Activated naive CD4-positive, alpha-beta T cell treated with anti-CD3 and anti-CD28 coated beads for 36 hours (primary cell): ENCODE measurements at regions of chr11 and their contacts with region 1.

Region 1: GRCh38 chr11:14892036-14892567 is at the start of gene CYP2R1:
- DNase-seq: peak; percentile 95
- H3K4me3 Mint-ChIP-seq: peak within 1 kb of the TSS; percentile 86
- H3K27ac Mint-ChIP-seq: peak within 1 kb of the TSS; percentile 98
- H3K4me1 Mint-ChIP-seq: peaks cover 52% of the 10 kb centered on the region
- H3K27me3 Mint-ChIP-seq: no peaks in the 10 kb centered on the region
- total RNA-seq, gene CYP2R1: 12.0 to 12.6 TPM

Region 2: DNA sequence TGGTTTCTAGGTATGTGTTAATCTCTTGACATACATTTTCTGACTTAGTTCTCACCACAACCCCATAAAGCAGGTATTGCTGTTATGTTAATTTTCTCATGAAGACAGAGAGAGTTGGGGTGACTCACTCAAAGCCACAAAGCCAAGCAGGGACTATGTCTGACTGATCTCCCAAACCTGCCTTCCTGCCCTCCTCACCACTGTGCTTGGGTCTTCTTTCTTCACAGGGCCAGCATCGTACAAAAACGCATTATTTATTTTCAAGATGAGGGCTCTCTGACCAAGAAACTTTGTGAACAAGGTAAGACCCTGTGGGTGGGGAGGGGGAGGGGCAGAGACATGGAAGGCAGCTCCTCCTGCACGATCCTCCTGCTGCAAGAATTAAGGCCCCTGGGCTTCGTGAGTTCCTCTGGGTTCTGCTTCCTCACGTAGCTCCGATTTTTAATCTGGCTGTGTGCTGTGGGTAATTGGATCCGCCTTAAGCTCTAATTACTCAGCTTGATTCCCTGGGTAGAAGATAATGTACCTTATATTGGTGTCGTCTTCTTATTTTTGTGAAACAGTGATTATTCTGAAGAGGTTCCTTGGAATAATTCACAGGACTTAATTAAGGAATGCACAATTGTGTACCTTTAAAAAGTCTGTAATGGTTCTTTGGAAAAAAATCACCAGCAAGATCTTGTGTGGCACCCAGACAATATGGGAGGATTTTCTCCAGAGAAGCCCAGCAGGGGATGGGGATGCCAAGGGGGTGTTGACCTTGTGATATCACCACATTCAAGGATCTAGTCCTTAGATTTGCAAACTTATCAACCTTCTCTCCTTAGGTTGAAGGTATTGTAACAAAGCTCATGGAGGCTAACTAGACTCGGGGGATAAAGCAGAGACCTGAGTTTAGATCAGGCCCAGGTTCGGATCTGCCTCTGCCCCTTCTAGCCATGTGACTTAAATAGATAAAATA is 816.7 kb before region 1 on chr11:
- CTCF ChIA-PET with region 1: no interaction called
- intact Hi-C with region 1: loop called (anchors 1 kb)
- DNase-seq: peak; percentile 86
- H3K4me3 Mint-ChIP-seq: peak overlapping the region; percentile 13
- H3K27ac Mint-ChIP-seq: peak overlapping the region; percentile 62
- H3K4me1 Mint-ChIP-seq: peaks cover 55% of the 10 kb centered on the region
- H3K27me3 Mint-ChIP-seq: no peaks in the 10 kb centered on the region

Region 3: DNA sequence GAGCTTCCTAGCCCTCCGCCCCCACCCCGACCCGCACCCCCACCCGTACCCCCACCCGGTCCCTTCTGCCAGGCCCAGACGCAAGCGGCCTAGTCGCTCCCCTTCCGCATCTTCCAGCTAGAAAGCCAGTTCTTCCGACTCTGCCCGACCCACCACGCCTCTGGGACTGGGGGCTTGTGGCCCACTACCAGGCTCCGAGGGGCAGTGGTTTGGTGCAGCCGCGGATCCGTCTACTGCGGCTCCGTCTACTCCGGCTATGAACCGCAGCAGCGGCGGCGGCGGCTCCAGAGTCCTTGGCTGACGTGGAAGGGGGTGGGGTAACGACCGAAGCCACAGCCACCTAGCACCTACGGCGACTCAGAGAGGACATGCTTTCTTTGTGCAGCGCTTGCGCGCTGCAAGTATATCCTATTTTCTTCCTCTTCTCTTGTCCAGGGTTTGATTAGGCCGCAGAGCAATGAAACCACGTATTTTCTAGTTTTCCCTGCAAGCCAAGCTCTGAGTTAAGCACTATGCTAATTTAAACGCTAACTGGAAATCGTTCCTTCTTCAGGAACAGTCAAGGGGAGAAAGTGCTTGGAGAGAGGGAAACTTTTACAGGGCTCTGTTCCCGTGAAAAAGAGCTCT is 392.4 kb before region 1 on chr11 and contains the start of gene COPB1:
- CTCF ChIA-PET with region 1: no interaction called
- intact Hi-C with region 1: loop called (anchors 1 kb)
- DNase-seq: peak; percentile 97
- H3K4me3 Mint-ChIP-seq: peak within 1 kb of the TSS; percentile 99
- H3K27ac Mint-ChIP-seq: peak within 1 kb of the TSS; percentile 99
- H3K4me1 Mint-ChIP-seq: peaks cover 40% of the 10 kb centered on the region
- H3K27me3 Mint-ChIP-seq: no peaks in the 10 kb centered on the region
- total RNA-seq, gene COPB1: 111 to 112 TPM

Region 4: DNA sequence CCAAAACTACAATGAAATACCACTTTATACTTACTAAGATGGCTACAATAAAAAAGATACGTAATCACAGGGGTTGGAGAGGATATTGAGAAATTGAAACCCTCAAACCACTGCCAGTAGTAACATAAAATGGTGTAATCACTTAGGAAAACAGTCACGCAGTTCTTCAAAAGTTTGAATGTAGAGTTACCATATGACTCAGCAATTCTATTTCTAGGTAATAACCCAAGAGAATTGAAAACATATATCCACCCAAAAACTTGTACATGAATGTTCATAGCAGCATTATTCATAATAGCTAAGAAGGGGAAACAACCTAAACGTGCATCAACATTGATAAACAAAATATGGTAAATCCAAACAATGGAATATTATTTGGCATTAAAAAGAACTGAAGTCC is 347.5 kb before region 1 on chr11:
- CTCF ChIA-PET with region 1: interaction called, 3 read pairs
- intact Hi-C with region 1: loop called (anchors 1 kb)
- DNase-seq: no peak
- H3K4me3 Mint-ChIP-seq: no peak overlapping the region
- H3K27ac Mint-ChIP-seq: no peak overlapping the region
- H3K4me1 Mint-ChIP-seq: peaks cover 52% of the 10 kb centered on the region
- H3K27me3 Mint-ChIP-seq: no peaks in the 10 kb centered on the region

Region 5: GRCh38 chr11:14764579-14765527 is 127.2 kb before region 1 on chr11:
- CTCF ChIA-PET with region 1: no interaction called
- intact Hi-C with region 1: loop called (anchors 1 kb)
- DNase-seq: peak; percentile 58
- H3K4me3 Mint-ChIP-seq: peak overlapping the region; percentile 41
- H3K27ac Mint-ChIP-seq: no peak overlapping the region
- H3K4me1 Mint-ChIP-seq: peaks cover 45% of the 10 kb centered on the region
- H3K27me3 Mint-ChIP-seq: no peaks in the 10 kb centered on the region

Region 6: GRCh38 chr11:14872032-14872431 is 20.1 kb before region 1 on chr11:
- CTCF ChIA-PET with region 1: no interaction called
- intact Hi-C with region 1: loop called (anchors 2 kb)
- DNase-seq: no peak
- H3K4me3 Mint-ChIP-seq: no peak overlapping the region
- H3K27ac Mint-ChIP-seq: peak overlapping the region; percentile 67
- H3K4me1 Mint-ChIP-seq: peaks cover 20% of the 10 kb centered on the region
- H3K27me3 Mint-ChIP-seq: no peaks in the 10 kb centered on the region

Region 7: DNA sequence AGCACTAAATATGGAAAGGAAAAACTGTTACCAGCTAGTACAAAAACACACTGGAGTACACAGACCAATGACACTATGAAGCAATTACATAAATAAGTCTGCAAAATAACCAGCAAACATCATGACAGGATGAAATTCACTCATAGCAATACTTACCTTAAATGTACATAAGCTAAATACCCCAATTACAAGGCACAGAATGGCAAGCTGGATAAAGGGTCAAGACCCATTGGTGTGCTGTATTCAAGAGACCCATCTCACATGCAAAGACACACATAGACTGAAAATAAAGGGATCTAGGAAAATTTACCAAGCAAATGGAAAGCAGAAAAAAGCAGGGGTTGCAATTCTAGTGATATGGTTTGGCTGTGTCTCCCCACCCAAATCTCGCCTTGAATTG is 124.1 kb after region 1 on chr11:
- CTCF ChIA-PET with region 1: no interaction called
- intact Hi-C with region 1: no loop called
- DNase-seq: no peak
- H3K4me3 Mint-ChIP-seq: no peak overlapping the region
- H3K27ac Mint-ChIP-seq: no peak overlapping the region
- H3K4me1 Mint-ChIP-seq: no peaks in the 10 kb centered on the region
- H3K27me3 Mint-ChIP-seq: peaks cover 17% of the 10 kb centered on the region